Dorsolateral prefrontal cortex (tissue), 120 donors: ENCODE measurements at regions of chr14 and their contacts with region 1.

Region 1: GRCh38 chr14:21557084-21557901 is 22.6 kb downstream of the OR10G3 start:
- DNase-seq: peak in 7 of 10 donors; percentile 49 to 89 (median 57)
- H3K4me3 ChIP-seq: peak overlapping the region; percentile 20 to 65 (median 48)
- H3K27ac ChIP-seq: peak overlapping the region in 48 of 59 donors; percentile 11 to 85 (median 62)
- H3K27me3 ChIP-seq: no peaks in the 10 kb centered on the region
- CTCF ChIP-seq: peak; percentile 69 to 96 (median 84)

Region 2: GRCh38 chr14:21498553-21499526 is 58.5 kb before region 1 on chr14:
- intact Hi-C with region 1: loop called (anchors 1 to 5 kb)
- DNase-seq: no peak
- H3K4me3 ChIP-seq: no peak overlapping the region
- H3K27ac ChIP-seq: peak overlapping the region in 3 of 59 donors; percentile 7 to 32 (median 16)
- H3K27me3 ChIP-seq: no peaks in the 10 kb centered on the region
- CTCF ChIP-seq: peak; percentile 45 to 78 (median 62)

Region 3: GRCh38 chr14:21510735-21511657 is 46.3 kb before region 1 on chr14 and contains the start of gene METTL3:
- intact Hi-C with region 1: loop called (anchors 5 kb)
- DNase-seq: peak; percentile 90 to 99 (median 98)
- H3K4me3 ChIP-seq: peak within 1 kb of the TSS; percentile 65 to 100 (median 90)
- H3K27ac ChIP-seq: peak within 1 kb of the TSS in 52 of 59 donors; percentile 21 to 91 (median 74)
- H3K27me3 ChIP-seq: no peaks in the 10 kb centered on the region
- CTCF ChIP-seq: peak in 36 of 56 donors; percentile 4 to 54 (median 28)
- total RNA-seq, gene METTL3: 30.0 to 59.4 (median 43.7) TPM